GM12878 (cell line): ENCODE measurements at regions of chr18 and their contacts with region 1.

Region 1: GRCh38 chr18:40006634-40007033 is 1948.4 kb upstream of the PIK3C3 start:
- DNase-seq: no peak
- ATAC-seq: no peak
- H3K4me3 ChIP-seq: no peak overlapping the region
- H3K27ac ChIP-seq: no peak overlapping the region
- H3K4me1 ChIP-seq: no peaks in the 10 kb centered on the region
- H3K27me3 ChIP-seq: no peaks in the 10 kb centered on the region
- CTCF ChIP-seq: no peak
- EP300 ChIP-seq: no peak
- POLR2A ChIP-seq: no peak
- RAD21 ChIP-seq: no peak

Region 2: DNA sequence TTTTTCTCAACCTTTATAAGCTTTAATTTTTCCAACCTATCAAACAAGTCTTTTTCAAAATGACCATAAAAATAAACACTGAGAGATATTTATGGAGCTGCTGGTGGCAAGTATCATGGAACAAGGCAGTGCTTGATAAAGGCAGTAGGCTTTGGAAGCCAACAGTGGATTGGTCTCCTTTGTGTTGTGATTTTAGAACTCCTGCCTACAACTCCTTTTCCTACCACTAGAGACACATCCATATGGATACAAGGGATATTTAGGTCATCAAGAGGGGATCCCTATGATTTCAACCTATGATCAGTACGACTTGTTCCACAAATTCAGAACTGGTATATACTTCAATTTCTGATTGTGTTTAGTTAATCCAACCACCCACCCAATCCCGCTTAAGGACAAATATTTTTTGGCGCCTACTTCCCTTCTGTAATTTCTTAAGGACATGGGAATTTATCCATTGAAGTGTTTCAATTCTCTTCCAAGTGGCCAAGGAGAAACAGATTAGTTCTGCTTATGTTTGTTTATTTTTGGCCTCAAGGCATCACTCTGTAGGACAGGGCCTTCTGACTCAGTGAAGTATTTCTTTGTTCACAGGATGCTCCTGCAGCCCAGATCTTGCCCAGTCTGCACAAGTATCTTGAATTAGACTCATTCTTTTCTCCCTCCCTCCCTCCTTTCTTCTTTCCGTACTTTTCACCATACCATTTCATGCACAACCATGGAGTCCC is 171.2 kb before region 1 on chr18:
- CTCF ChIA-PET with region 1: no interaction called
- POLR2A ChIA-PET with region 1: no interaction called
- RAD21 ChIA-PET with region 1: no interaction called
- SMC1A ChIA-PET with region 1: no interaction called
- in situ Hi-C with region 1: no loop called
- intact Hi-C with region 1: no loop called
- DNase-seq: no peak
- ATAC-seq: no peak
- H3K4me3 ChIP-seq: no peak overlapping the region
- H3K27ac ChIP-seq: no peak overlapping the region
- H3K4me1 ChIP-seq: no peaks in the 10 kb centered on the region
- H3K27me3 ChIP-seq: no peaks in the 10 kb centered on the region
- CTCF ChIP-seq: no peak
- EP300 ChIP-seq: no peak
- POLR2A ChIP-seq: no peak
- RAD21 ChIP-seq: no peak

Region 3: GRCh38 chr18:39886136-39886535 is 120.5 kb before region 1 on chr18:
- CTCF ChIA-PET with region 1: no interaction called
- POLR2A ChIA-PET with region 1: no interaction called
- RAD21 ChIA-PET with region 1: no interaction called
- SMC1A ChIA-PET with region 1: no interaction called
- in situ Hi-C with region 1: no loop called
- intact Hi-C with region 1: no loop called
- DNase-seq: no peak
- ATAC-seq: no peak
- H3K4me3 ChIP-seq: no peak overlapping the region
- H3K27ac ChIP-seq: no peak overlapping the region
- H3K4me1 ChIP-seq: no peaks in the 10 kb centered on the region
- H3K27me3 ChIP-seq: no peaks in the 10 kb centered on the region
- CTCF ChIP-seq: no peak
- EP300 ChIP-seq: no peak
- POLR2A ChIP-seq: no peak
- RAD21 ChIP-seq: no peak

Region 4: DNA sequence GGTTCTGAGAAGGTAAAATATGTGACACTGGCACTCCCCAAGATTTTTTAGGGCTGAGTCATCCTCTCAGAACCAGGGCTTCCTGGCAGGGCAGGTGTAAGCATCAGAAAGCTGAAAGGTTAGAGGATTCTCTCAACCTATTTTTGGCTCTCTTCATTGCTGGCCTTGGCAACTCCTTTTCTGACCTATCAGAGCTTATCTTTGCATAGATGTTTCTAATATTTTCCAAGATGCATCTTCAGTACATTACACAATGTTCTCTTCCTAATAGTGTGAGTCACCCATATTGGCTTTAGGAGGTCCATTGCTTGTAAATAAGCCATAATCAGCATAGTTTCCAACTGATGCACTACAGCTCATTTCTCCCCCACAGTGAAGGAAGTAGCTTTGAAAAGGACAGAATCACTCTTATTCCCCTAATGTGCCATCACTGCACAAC is 60.0 kb before region 1 on chr18:
- CTCF ChIA-PET with region 1: no interaction called
- POLR2A ChIA-PET with region 1: no interaction called
- RAD21 ChIA-PET with region 1: no interaction called
- SMC1A ChIA-PET with region 1: no interaction called
- in situ Hi-C with region 1: no loop called
- intact Hi-C with region 1: loop called (anchors 10 kb)
- DNase-seq: no peak
- ATAC-seq: peak; percentile 22; the same call in 2 of the 3 replicates
- H3K4me3 ChIP-seq: no peak overlapping the region
- H3K27ac ChIP-seq: no peak overlapping the region
- H3K4me1 ChIP-seq: no peaks in the 10 kb centered on the region
- H3K27me3 ChIP-seq: no peaks in the 10 kb centered on the region
- CTCF ChIP-seq: no peak
- EP300 ChIP-seq: no peak
- POLR2A ChIP-seq: no peak
- RAD21 ChIP-seq: no peak

Region 5: DNA sequence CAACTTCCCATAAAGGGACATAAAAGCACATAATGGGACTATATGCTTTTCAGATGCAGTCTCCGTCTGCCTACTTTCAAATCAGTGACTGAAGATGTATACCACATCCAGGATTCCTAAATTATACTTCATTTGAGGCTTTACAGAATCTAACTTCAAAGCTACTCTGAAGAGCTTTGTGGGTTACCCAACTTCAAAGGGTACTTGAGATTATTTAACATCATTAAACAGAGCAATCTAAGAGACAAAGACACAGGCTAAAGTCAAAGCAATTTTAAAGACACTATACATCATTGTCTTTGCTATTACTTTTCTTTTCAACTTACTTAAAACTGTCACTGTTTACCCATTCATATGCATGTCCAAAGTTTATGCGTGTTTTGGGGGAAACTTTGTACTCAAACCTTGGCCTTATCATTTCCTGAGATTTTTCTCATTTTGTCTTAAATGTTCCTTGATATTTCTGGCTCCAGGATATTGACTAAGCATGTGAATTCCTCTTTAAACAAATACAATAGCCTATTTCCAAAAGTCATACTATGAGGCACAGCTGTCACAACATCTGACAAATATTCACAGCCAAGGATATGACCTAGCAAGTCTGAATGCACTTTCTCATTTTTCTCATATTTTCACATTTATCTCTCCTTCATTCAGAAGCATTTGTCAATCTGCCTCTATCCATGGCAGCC is 36.7 kb before region 1 on chr18:
- CTCF ChIA-PET with region 1: no interaction called
- POLR2A ChIA-PET with region 1: no interaction called
- RAD21 ChIA-PET with region 1: no interaction called
- SMC1A ChIA-PET with region 1: no interaction called
- in situ Hi-C with region 1: no loop called
- intact Hi-C with region 1: no loop called
- DNase-seq: no peak
- ATAC-seq: no peak
- H3K4me3 ChIP-seq: no peak overlapping the region
- H3K27ac ChIP-seq: no peak overlapping the region
- H3K4me1 ChIP-seq: no peaks in the 10 kb centered on the region
- H3K27me3 ChIP-seq: no peaks in the 10 kb centered on the region
- CTCF ChIP-seq: no peak
- EP300 ChIP-seq: no peak
- POLR2A ChIP-seq: no peak
- RAD21 ChIP-seq: no peak